PC-3 (cell line): ENCODE measurements at regions of chr1 and their contacts with region 1.

Region 1: GRCh38 chr1:152654110-152654509 is 9.1 kb upstream of the LCE2D start:
- DNase-seq: peak; percentile 84
- ATAC-seq: peak; percentile 83
- H3K4me3 ChIP-seq: no peak overlapping the region
- H3K27ac ChIP-seq: no peak overlapping the region
- H3K4me1 ChIP-seq: no peaks in the 10 kb centered on the region
- H3K27me3 ChIP-seq: peaks cover 24% of the 10 kb centered on the region
- CTCF ChIP-seq: peak; percentile 93

Region 2: GRCh38 chr1:152546704-152547103 is 107.4 kb before region 1 on chr1:
- CTCF ChIA-PET with region 1: no interaction called
- POLR2A ChIA-PET with region 1: no interaction called
- intact Hi-C with region 1: no loop called
- DNase-seq: no peak
- ATAC-seq: no peak
- H3K4me3 ChIP-seq: no peak overlapping the region
- H3K27ac ChIP-seq: no peak overlapping the region
- H3K4me1 ChIP-seq: no peaks in the 10 kb centered on the region
- H3K27me3 ChIP-seq: no peaks in the 10 kb centered on the region
- CTCF ChIP-seq: no peak

Region 3: GRCh38 chr1:152926091-152926490 is 272.0 kb after region 1 on chr1:
- CTCF ChIA-PET with region 1: no interaction called
- POLR2A ChIA-PET with region 1: no interaction called
- intact Hi-C with region 1: loop called (anchors 5 kb)
- DNase-seq: peak; percentile 78
- ATAC-seq: peak; percentile 54
- H3K4me3 ChIP-seq: no peak overlapping the region
- H3K27ac ChIP-seq: no peak overlapping the region
- H3K4me1 ChIP-seq: no peaks in the 10 kb centered on the region
- H3K27me3 ChIP-seq: peaks cover 24% of the 10 kb centered on the region
- CTCF ChIP-seq: peak; percentile 85